ENCODE measurements at regions of chr22 and their contacts with region 1.

Region 1: DNA sequence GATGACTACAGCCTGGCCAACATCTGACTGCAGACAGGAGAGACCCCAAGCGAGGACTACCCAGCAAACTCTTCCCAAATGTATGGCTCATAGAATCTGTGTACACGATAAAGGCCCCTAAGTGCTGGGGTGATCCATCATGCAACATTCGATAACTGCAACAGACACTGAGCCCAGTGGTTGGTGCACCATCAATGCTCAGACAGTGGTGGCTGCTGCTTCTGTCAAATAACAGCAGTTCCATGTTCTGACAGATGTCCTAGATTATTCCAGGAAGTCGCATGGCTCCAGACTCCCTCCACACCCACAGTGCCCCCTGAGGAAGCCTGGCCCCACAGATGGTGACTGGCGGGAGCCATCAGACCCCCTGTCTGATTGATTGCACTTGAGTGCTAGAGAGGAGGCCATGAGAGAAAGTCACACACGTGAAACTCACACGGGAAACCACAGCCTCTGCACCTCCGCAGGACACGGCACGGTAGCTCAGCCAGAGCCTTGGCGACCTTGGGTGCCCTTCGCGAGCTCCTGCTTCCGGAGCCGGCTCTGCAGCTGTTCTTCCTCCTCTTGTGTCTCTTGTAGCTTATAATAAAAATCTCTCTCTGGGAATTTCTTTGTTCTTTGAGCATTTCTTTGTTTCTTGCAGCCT is 1155.9 kb downstream of the TBC1D22A start:
- DNase-seq: no peak
- ATAC-seq: no peak
- H3K4me3 ChIP-seq: no peak overlapping the region
- H3K27ac ChIP-seq: no peak overlapping the region
- H3K4me1 ChIP-seq: no peaks in the 10 kb centered on the region
- H3K27me3 ChIP-seq: no peaks in the 10 kb centered on the region
- CTCF ChIP-seq: no peak

Region 2: DNA sequence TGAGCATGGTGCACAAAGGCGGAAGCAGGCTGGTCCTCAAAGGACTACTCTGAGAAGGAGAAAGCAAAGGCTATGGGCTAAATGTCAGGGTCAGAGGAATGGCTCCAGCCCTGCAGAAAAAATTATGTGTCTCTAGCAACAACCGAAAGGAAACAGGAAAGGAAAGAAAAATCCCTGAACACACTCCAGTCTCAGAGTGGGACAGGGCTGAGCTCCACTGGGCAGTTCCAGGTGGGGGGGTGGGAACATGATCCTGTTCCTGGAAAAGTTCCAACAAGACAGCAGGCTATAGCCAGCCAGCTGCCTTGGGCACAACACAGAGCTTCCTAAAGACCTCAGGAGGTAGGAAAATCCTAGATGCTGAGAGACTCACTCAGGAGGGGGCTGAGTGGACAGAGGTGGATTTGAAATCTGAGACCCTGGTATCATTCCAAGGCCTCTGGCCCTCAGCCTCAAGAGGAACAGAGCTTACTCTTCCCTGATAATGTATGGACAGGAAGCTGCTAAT is 67.7 kb before region 1 on chr22:
- CTCF ChIA-PET with region 1: no interaction called
- POLR2A ChIA-PET with region 1: no interaction called
- in situ Hi-C with region 1: no loop called
- intact Hi-C with region 1: no loop called
- DNase-seq: no peak
- ATAC-seq: no peak
- H3K4me3 ChIP-seq: no peak overlapping the region
- H3K27ac ChIP-seq: no peak overlapping the region
- H3K4me1 ChIP-seq: no peaks in the 10 kb centered on the region
- H3K27me3 ChIP-seq: no peaks in the 10 kb centered on the region
- CTCF ChIP-seq: no peak

Region 3: DNA sequence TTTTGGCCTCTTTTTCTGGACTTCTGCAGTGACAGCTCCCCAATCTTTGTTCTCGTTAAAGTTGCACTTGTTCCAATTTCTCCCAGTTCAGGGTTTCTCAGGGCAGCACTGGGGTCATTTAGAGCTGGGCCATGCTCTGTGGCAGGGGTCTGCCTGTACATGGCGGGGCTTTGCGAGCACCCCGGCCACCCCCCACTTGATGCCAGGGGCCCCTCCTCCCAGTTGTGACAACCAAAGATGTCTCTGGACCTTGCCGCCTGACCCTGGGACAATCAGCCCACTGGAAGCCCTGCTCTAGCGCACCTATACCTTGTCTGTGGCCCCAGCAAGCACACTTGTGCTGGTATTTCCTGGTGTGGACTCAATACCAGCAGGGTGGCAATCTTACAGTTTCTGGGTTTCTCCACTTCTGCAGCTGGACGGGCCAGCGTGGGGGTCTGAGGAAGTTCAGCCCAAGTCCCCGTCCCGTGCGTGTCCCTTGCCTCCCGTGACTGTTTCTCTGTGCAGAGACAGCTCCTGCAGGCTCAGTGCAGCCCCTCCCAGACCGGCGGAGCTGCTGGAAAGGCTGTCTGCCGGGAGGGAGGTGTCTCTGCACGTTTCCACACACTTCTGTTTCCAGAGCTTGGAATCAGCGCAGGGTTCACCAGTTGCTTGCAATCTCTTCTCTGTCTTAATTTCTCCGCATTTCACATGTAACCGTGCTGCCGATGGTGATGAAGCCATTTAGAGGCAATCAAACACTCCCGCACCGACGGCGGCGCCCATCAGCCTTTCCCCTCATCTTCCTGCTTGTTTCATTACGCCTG is 580.3 kb after region 1 on chr22:
- CTCF ChIA-PET with region 1: interaction called, 19 read pairs
- POLR2A ChIA-PET with region 1: no interaction called
- in situ Hi-C with region 1: no loop called
- intact Hi-C with region 1: no loop called
- DNase-seq: no peak
- ATAC-seq: 0 out of 2 replicates have a peak, but pooled peaks have one; percentile 40
- H3K4me3 ChIP-seq: no peak overlapping the region
- H3K27ac ChIP-seq: no peak overlapping the region
- H3K4me1 ChIP-seq: no peaks in the 10 kb centered on the region
- H3K27me3 ChIP-seq: no peaks in the 10 kb centered on the region
- CTCF ChIP-seq: no peak

Measured in Panc1 (cell line).